H1 (cell line): ENCODE measurements at regions of chr17 and their contacts with region 1.

Region 1: GRCh38 chr17:36463916-36464315 is 22.6 kb upstream of the ZNHIT3 start:
- DNase-seq: peak; percentile 69 to 95
- H3K4me3 ChIP-seq: peak overlapping the region in 1 of 4 experiments; percentile 34; a peak in 2 of 8 replicates
- H3K27ac ChIP-seq: no peak overlapping the region
- H3K4me1 ChIP-seq: 0 out of 7 replicates have a peak, but pooled peaks cover 0 to 2% (median 0%) of the 10 kb centered on the region in 4 experiments
- H3K27me3 ChIP-seq: peaks cover 4 to 28% (median 18%) of the 10 kb centered on the region in 4 experiments
- CTCF ChIP-seq: peak in 1 of 3 experiments; percentile 9; a peak in 2 of 4 replicates
- EP300 ChIP-seq: 0 out of 3 replicates have a peak, but pooled peaks of 1 of the 2 experiments have one; percentile 8
- POLR2A ChIP-seq: no peak
- RAD21 ChIP-seq: peak in 1 of 2 experiments; percentile 15; a peak in 1 of 4 replicates

Region 2: GRCh38 chr17:36475346-36475970 is 11.5 kb after region 1 on chr17:
- CTCF ChIA-PET with region 1: interaction called, 20 read pairs
- POLR2A ChIA-PET with region 1: interaction called, 3 read pairs
- DNase-seq: no peak
- H3K4me3 ChIP-seq: no peak overlapping the region
- H3K27ac ChIP-seq: no peak overlapping the region
- H3K4me1 ChIP-seq: no peaks in the 10 kb centered on the region
- H3K27me3 ChIP-seq: peaks cover 0 to 4% (median 0%) of the 10 kb centered on the region in 4 experiments; a peak in 2 of 7 replicates
- CTCF ChIP-seq: no peak
- EP300 ChIP-seq: no peak
- POLR2A ChIP-seq: no peak
- RAD21 ChIP-seq: no peak